ENCODE measurements at regions of chr13 and their contacts with region 1.

Region 1: DNA sequence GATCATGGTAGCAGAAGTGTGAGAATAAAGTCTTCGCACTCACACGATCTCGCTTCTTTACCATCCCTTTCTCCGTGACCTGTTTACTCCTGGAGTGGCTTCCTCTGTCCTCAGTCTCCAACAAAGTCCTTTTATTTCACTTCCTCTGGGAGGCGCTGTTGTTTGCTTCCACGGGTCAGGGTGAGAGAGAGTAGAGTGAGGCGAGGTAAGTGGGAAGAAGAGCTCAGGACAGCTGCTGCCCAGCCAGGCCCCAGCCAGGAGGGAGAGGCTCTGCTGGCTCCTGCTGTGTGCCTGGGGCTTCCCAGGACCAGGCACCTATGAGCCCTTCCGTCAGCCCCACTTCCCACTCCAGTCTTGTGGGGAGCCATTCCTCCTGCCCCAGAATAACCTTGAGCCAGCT is 242.1 kb downstream of the FGF9 start:
- DNase-seq: peak; percentile 59
- ATAC-seq: peak; percentile 93
- H3K4me3 Mint-ChIP-seq: no peak overlapping the region
- H3K27ac Mint-ChIP-seq: no peak overlapping the region
- H3K4me1 Mint-ChIP-seq: peaks cover 26% of the 10 kb centered on the region
- H3K27me3 Mint-ChIP-seq: no peaks in the 10 kb centered on the region
- CTCF ChIP-seq: peak; percentile 65

Region 2: GRCh38 chr13:21638319-21639282 is 274.4 kb before region 1 on chr13:
- CTCF ChIA-PET with region 1: interaction called, 10 read pairs
- POLR2A ChIA-PET with region 1: no interaction called
- DNase-seq: no peak
- ATAC-seq: no peak
- H3K4me3 Mint-ChIP-seq: no peak overlapping the region
- H3K27ac Mint-ChIP-seq: no peak overlapping the region
- H3K4me1 Mint-ChIP-seq: no peaks in the 10 kb centered on the region
- H3K27me3 Mint-ChIP-seq: no peaks in the 10 kb centered on the region; the same call in 1 of the 2 replicates
- CTCF ChIP-seq: peak; percentile 70

Region 3: DNA sequence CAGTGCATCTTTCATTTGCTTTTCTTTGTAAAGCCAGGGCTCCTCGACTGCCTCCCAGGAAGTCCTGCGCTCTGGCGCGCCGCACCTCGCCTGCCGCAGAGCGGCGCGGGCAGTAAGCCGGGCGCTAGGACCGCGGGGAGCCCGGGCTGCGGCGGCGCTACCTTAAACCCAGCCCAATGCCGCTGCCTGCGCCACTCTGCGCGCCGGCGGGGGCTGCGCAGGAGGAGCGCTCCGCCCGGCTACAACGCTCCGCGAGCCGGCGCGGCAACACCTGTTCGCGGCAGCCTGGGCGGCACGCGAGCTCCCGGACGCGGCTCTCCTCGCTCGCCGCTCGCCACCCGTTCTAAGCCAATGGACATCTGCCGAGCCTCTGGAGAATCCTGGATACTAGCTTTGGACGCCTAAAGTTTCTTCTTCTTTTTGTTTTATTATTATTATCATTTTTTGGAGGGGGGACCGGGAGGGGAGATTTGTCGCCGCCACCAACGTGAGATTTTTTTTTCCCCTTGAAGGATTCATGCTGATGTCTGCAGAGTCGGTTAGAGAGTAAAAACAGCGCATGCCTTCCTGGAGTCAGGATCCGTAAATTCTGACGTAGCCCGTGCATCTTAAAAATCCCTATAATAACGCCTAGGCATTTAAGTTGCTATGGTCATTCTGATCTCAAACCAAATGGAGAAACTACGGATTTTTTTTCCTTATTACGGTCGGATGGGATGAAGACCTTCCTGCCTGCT is 242.0 kb before region 1 on chr13 and contains the start of gene FGF9:
- CTCF ChIA-PET with region 1: interaction called, 12 read pairs
- POLR2A ChIA-PET with region 1: no interaction called
- DNase-seq: peak; percentile 83
- ATAC-seq: peak; percentile 49
- H3K4me3 Mint-ChIP-seq: peak within 1 kb of the TSS; percentile 86
- H3K27ac Mint-ChIP-seq: peak within 1 kb of the TSS; percentile 12; the same call in 1 of the 2 replicates
- H3K4me1 Mint-ChIP-seq: peaks cover 42% of the 10 kb centered on the region
- H3K27me3 Mint-ChIP-seq: peaks cover 89% of the 10 kb centered on the region
- CTCF ChIP-seq: no peak
- total RNA-seq, gene FGF9: 0.25 to 0.27 TPM (median 0.26 TPM) in 3 replicates

Region 4: DNA sequence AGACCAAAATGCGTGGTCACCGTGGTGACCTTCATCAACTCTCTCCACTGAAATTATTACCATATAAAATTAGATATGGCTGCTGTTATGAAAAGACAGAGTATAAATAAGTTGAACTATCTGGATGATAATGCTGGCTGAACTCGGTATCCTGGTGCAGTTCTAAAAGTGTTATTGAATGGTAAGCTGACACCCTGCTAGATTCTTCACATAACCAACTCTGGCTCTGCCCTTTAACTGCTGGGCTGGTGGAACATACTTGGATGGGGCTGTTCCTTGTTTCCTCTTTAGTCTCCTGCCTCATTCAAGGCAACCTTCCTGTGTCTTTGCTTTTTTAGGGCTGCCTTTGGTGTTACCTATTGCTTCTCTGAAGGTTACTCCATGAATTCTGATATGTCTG is 135.2 kb before region 1 on chr13:
- CTCF ChIA-PET with region 1: no interaction called
- POLR2A ChIA-PET with region 1: no interaction called
- DNase-seq: no peak
- ATAC-seq: no peak
- H3K4me3 Mint-ChIP-seq: no peak overlapping the region
- H3K27ac Mint-ChIP-seq: no peak overlapping the region
- H3K4me1 Mint-ChIP-seq: no peaks in the 10 kb centered on the region
- H3K27me3 Mint-ChIP-seq: no peaks in the 10 kb centered on the region
- CTCF ChIP-seq: no peak

Region 5: GRCh38 chr13:21894091-21894490 is 18.9 kb before region 1 on chr13:
- CTCF ChIA-PET with region 1: interaction called, 15 read pairs
- POLR2A ChIA-PET with region 1: no interaction called
- DNase-seq: no peak
- ATAC-seq: no peak
- H3K4me3 Mint-ChIP-seq: no peak overlapping the region
- H3K27ac Mint-ChIP-seq: no peak overlapping the region
- H3K4me1 Mint-ChIP-seq: peaks cover 26% of the 10 kb centered on the region
- H3K27me3 Mint-ChIP-seq: no peaks in the 10 kb centered on the region
- CTCF ChIP-seq: no peak

Region 6: DNA sequence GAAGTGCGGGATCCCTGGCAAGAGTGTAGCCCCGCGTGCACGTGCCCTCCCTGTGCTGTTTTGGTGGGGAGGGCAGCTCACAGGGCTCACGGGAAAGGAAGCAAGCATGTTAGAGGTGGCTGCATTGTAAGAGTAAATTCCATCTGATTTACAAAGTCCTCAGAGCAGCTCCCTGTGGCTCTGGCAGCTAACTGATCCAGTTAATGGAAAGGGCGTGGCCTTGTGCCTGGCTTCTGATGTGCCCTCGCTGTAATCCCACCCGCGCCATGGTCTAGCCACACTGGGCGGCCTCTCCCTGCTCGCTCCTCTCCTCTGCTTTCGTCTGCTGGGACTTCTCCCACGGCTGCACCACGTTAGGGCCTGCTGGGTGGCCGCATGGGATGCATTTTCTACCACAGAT is 16.4 kb after region 1 on chr13:
- CTCF ChIA-PET with region 1: interaction called, 21 read pairs
- POLR2A ChIA-PET with region 1: no interaction called
- DNase-seq: no peak
- ATAC-seq: peak; percentile 56
- H3K4me3 Mint-ChIP-seq: no peak overlapping the region
- H3K27ac Mint-ChIP-seq: no peak overlapping the region
- H3K4me1 Mint-ChIP-seq: peaks cover 64% of the 10 kb centered on the region
- H3K27me3 Mint-ChIP-seq: peaks cover under 1% of the 10 kb centered on the region; the same call in 1 of the 2 replicates
- CTCF ChIP-seq: no peak